ENCODE measurements at regions of chr19 and their contacts with region 1.

Region 1: GRCh38 chr19:36114763-36115452 is at the start of gene POLR2I:
- DNase-seq: peak; percentile 99
- ATAC-seq: peak; percentile 95
- H3K4me3 Mint-ChIP-seq: peak within 1 kb of the TSS; percentile 98
- H3K27ac Mint-ChIP-seq: peak within 1 kb of the TSS; percentile 93
- H3K4me1 Mint-ChIP-seq: peaks cover 29% of the 10 kb centered on the region
- H3K27me3 Mint-ChIP-seq: no peaks in the 10 kb centered on the region
- total RNA-seq, gene POLR2I: 89.6 to 97.3 TPM

Region 2: GRCh38 chr19:35648017-35648961 is 466.6 kb before region 1 on chr19 and contains the start of gene COX6B1:
- CTCF ChIA-PET with region 1: no interaction called
- POLR2A ChIA-PET with region 1: no interaction called
- intact Hi-C with region 1: loop called in 1 of 2 experiments (anchors 1 kb)
- DNase-seq: peak; percentile 95
- ATAC-seq: peak; percentile 76
- H3K4me3 Mint-ChIP-seq: peak within 1 kb of the TSS; percentile 92
- H3K27ac Mint-ChIP-seq: peak within 1 kb of the TSS; percentile 84
- H3K4me1 Mint-ChIP-seq: peaks cover 39% of the 10 kb centered on the region
- H3K27me3 Mint-ChIP-seq: no peaks in the 10 kb centered on the region
- total RNA-seq, gene COX6B1: 385 to 437 TPM

Region 3: GRCh38 chr19:35748106-35749020 is 366.5 kb before region 1 on chr19 and contains the start of gene LIN37:
- CTCF ChIA-PET with region 1: no interaction called
- POLR2A ChIA-PET with region 1: no interaction called
- intact Hi-C with region 1: loop called in 1 of 2 experiments (anchors 1 kb)
- DNase-seq: peak; percentile 99
- ATAC-seq: peak; percentile 81
- H3K4me3 Mint-ChIP-seq: peak within 1 kb of the TSS; percentile 89
- H3K27ac Mint-ChIP-seq: peak within 1 kb of the TSS; percentile 94
- H3K4me1 Mint-ChIP-seq: peaks cover 40% of the 10 kb centered on the region
- H3K27me3 Mint-ChIP-seq: no peaks in the 10 kb centered on the region
- total RNA-seq, gene LIN37: 8.4 to 12.7 TPM

Region 4: DNA sequence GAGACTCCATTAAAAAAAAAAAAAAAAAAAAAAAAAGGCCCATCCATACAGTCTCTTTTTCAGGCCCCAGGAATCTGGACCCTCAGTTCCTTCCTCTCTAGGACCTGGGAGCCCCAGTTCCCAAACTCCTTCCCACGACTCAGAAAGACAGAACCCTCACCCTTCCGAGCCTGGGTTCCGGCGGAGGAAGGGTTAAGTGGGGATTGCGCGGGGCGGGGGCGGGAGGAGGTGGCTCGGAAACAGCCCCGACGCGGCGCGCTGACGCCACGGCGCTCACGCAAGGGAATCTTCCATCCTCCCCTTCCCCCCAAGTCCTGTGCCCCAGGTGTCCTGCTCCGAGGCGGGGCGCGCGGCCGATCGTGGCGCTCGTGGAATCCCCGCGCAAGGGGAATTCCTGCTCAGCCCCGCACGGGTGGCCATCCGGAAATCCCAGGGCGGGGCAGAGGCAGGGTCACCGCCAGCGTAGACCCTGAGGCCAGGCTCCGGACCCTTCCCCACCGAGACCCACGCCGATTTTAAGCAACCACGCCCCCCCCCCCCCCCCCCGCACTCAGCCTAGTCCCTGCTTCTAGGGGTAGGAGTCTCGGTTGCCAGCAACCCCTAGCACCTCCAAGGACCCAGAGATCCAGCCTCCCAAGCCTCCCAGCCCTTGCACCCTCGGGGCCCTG is 215.2 kb before region 1 on chr19:
- CTCF ChIA-PET with region 1: no interaction called
- POLR2A ChIA-PET with region 1: no interaction called
- intact Hi-C with region 1: loop called in 1 of 2 experiments (anchors 1 kb)
- DNase-seq: peak; percentile 94
- ATAC-seq: peak; percentile 54
- H3K4me3 Mint-ChIP-seq: peak overlapping the region; percentile 75
- H3K27ac Mint-ChIP-seq: peak overlapping the region; percentile 94
- H3K4me1 Mint-ChIP-seq: peaks cover 65% of the 10 kb centered on the region
- H3K27me3 Mint-ChIP-seq: no peaks in the 10 kb centered on the region

Region 5: DNA sequence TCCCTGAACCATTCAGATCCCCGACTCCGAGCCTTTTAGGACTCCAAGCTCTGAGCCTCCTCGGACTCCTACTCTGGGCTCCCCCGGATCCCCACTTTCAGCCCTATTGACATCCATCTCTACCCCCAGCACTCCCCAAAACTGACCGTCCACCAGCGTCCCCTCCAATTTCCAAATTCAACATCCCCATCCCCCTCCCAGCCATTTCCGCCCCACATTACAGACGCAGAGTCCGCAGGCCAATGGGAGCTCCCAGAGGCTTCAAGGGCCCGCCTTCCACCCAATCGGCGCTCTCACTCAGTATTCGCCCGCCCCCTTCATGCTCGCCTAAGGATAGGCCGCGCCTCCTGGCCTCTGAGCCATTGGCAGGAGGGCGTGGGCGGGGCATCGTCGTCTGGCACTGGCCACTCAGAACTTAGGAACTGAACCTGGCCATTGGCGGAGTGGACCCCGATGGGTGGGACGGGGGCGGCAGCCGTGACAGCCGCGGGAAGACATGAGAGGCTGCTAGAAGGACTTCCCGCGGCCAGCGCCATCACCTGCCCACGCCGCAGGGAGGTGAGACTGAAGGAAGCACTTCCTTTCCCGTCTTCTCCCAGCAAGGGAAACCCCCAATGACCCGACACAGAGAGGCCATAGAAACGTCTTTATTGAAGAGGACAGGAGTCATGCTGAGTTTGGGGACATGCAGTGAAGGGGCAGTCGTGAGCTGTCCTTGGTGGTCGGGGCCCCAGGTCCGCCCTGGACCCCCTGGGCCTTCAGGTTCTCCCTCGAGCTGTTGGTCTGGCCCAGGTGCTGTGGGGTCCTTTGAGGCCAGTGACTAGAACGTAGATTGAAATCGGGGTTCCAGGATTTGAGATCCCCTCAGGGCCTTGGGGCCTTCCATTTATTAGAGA is 100.6 kb before region 1 on chr19 and contains the start of gene ALKBH6:
- CTCF ChIA-PET with region 1: no interaction called
- POLR2A ChIA-PET with region 1: interaction called, 3 read pairs
- intact Hi-C with region 1: loop called (anchors 1 kb)
- DNase-seq: peak; percentile 100
- ATAC-seq: peak; percentile 98
- H3K4me3 Mint-ChIP-seq: peak within 1 kb of the TSS; percentile 96
- H3K27ac Mint-ChIP-seq: peak within 1 kb of the TSS; percentile 94
- H3K4me1 Mint-ChIP-seq: peaks cover 32% of the 10 kb centered on the region
- H3K27me3 Mint-ChIP-seq: no peaks in the 10 kb centered on the region
- total RNA-seq, gene ALKBH6: 40.6 to 42.2 TPM

Region 6: DNA sequence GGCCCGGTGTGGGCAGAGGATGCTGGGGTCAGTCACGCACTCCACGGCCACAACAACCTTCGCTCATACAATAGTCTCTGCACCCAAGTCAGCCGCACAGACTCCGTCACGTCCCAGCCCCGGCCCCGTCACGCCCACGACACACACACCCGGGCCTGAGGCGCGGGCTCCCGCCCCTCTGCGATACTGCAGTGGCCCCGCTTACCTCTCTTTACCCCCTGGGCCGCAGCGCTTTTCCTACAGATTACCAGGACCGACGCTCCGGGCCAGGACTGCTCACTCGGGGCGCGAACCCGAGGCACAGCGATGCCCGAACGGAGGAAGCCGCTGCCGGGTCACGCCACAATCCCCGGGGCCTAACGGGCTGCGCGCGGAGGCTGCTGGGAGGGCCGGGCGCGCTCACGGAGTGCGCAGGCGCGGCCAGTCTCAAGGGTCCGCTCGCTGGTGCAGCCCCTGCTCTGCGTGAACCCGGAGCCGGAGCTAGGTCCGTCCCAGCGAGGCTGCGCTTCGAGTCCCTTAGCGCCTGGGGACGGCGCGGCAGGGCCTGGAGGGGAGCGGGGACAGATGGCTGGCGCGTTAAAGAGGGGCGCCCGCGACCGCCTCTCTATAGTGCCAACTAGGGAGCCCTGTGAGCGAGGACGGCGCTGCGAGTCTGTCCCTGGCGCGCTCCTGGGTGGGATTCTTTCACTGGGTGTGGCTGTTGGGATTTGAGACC is 303.5 kb after region 1 on chr19 and contains the start of gene ZFP82:
- CTCF ChIA-PET with region 1: no interaction called
- POLR2A ChIA-PET with region 1: no interaction called
- intact Hi-C with region 1: loop called in 1 of 2 experiments (anchors 1 kb)
- DNase-seq: peak; percentile 89
- ATAC-seq: peak; percentile 90
- H3K4me3 Mint-ChIP-seq: peak within 1 kb of the TSS; percentile 94
- H3K27ac Mint-ChIP-seq: peak within 1 kb of the TSS; percentile 97
- H3K4me1 Mint-ChIP-seq: peaks cover 12% of the 10 kb centered on the region
- H3K27me3 Mint-ChIP-seq: peaks cover 13% of the 10 kb centered on the region
- total RNA-seq, gene ZFP82: 8.4 to 8.8 TPM

Region 7: DNA sequence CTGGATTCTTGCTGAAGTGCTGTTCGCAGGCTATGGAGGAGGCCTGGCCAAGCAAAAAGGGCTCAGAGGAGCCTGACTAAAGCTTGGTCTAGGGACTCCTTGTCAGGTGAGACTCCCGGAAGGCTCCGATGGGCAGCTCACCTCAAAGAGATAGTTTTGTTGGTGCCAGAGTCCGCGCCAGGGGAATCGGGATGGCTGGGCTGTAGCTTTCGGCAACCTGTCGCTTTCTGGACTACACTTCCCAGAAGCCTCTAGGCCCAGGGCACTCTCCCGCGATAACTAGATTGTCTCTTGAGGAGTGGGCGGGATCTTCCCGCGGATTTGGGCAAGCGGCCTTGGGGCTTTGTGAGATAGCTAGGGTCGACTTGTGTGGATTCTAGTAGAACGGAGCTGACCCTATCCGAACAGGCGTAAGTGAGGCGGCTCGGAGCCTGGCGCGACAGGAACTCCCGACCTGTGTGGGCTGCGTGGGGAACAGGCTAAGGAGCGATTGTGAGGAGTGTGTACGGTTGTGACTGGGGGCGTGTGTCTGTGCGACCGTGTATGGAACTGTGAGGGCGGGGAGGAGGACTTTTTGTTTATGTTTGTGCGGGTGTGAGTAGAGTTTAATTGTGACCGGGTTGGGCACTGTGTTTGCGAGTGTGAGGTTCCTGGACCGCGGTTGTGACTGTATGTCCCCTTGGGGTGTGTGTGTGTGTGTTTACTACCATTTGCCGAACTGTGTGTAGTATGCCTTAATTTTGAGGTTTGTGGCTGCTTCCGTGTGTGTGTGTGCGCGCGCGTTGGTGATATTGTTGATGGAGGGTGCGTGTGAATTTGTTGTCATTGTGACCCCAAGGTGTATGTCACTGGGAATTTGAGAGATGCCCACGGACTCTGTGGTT is 735.9 kb after region 1 on chr19 and contains the start of gene ZNF345:
- CTCF ChIA-PET with region 1: no interaction called
- POLR2A ChIA-PET with region 1: no interaction called
- intact Hi-C with region 1: loop called in 1 of 2 experiments (anchors 2 kb)
- DNase-seq: peak; percentile 91
- ATAC-seq: peak; percentile 82
- H3K4me3 Mint-ChIP-seq: no peak within 1 kb of the TSS
- H3K27ac Mint-ChIP-seq: no peak within 1 kb of the TSS
- H3K4me1 Mint-ChIP-seq: peaks cover 10% of the 10 kb centered on the region
- H3K27me3 Mint-ChIP-seq: no peaks in the 10 kb centered on the region
- total RNA-seq, gene ZNF345: 3.5 to 4.6 TPM

Measured in activated CD4-positive, alpha-beta T cell treated with anti-CD3 and anti-CD28 coated beads for 36 hours (primary cell).